Calu3 (cell line): ENCODE measurements at regions of chr17 and their contacts with region 1.

Region 1: DNA sequence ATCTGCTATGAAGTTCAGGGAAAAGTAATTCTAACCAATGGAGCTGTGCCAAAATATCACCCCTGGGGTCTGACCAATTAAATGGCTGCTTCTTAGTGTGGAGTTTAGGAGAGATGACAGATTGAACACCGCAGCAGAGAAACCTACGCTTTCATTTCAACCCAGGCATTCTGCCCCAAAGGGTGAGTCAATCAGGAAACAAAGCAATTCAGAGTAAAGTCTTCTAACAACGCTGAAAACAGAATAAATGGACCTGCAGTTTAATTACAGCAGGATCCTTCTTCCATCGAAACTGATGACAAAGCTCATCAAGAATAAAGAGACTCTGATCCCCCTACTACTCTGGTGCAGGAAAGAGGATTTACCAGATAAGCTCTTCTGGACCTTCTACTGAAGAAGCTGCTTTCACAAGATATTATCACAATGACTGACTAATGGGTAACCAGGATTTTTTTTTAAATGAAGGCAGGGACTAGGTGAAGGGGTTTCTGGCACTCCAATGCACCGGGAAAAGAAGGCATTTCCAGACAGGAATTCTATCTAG is 16.7 kb downstream of the RFFL start:
- DNase-seq: peak; percentile 43
- H3K4me3 Mint-ChIP-seq: peak overlapping the region; percentile 61
- H3K27ac Mint-ChIP-seq: peak overlapping the region; percentile 92
- H3K4me1 Mint-ChIP-seq: peaks cover 49% of the 10 kb centered on the region
- H3K27me3 Mint-ChIP-seq: no peaks in the 10 kb centered on the region
- CTCF ChIP-seq: no peak

Region 2: DNA sequence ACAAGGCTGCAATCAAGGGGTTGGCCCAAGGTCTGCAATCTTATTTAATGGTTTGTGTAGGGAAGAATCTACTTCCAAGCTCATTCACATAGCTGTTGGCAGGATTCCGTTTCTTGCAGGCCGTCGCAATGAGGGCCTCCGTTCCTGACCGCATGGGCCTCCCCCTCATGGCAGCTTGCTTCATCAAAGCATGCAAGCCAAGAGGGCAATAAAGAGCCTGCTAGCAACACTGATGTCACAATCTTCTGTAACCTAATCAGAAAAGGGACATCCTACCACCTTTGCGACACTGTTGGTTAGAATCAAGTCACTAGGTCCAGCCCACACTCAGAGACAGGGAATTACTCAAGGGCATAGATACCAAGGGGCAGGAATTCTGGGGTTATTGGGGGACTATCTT is 181.1 kb before region 1 on chr17:
- CTCF ChIA-PET with region 1: no interaction called
- intact Hi-C with region 1: no loop called
- DNase-seq: no peak
- H3K4me3 Mint-ChIP-seq: no peak overlapping the region
- H3K27ac Mint-ChIP-seq: no peak overlapping the region
- H3K4me1 Mint-ChIP-seq: no peaks in the 10 kb centered on the region
- H3K27me3 Mint-ChIP-seq: peaks cover 97% of the 10 kb centered on the region
- CTCF ChIP-seq: no peak

Region 3: GRCh38 chr17:35018814-35019213 is 28.0 kb before region 1 on chr17:
- CTCF ChIA-PET with region 1: no interaction called
- intact Hi-C with region 1: loop called (anchors 1 kb)
- DNase-seq: peak; percentile 41
- H3K4me3 Mint-ChIP-seq: peak overlapping the region; percentile 21
- H3K27ac Mint-ChIP-seq: peak overlapping the region; percentile 77
- H3K4me1 Mint-ChIP-seq: peaks cover 21% of the 10 kb centered on the region
- H3K27me3 Mint-ChIP-seq: no peaks in the 10 kb centered on the region
- CTCF ChIP-seq: no peak

Region 4: DNA sequence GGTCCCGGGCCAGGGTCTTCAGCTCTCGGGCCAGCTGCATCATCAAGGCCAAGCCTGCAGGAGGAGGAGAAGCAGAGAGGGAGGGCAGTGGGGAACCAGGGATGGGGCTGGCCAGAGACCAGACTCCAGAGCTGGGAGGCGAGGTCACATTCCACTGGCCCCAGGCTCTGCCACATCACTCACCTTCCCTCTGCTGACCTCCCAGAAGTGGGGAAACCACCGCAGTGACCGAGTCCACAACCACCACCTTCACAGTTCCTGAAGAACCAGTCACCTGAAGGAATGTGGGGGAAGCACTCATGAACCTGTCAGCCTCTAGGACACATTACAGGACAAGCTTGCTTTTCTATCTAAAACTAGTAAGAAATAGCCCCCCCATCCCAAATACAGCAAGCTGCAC is 56.5 kb after region 1 on chr17:
- CTCF ChIA-PET with region 1: no interaction called
- intact Hi-C with region 1: no loop called
- DNase-seq: no peak
- H3K4me3 Mint-ChIP-seq: no peak overlapping the region
- H3K27ac Mint-ChIP-seq: no peak overlapping the region
- H3K4me1 Mint-ChIP-seq: no peaks in the 10 kb centered on the region
- H3K27me3 Mint-ChIP-seq: no peaks in the 10 kb centered on the region
- CTCF ChIP-seq: no peak